Activated B cell treated with CpG ODN at 0.5 μM for 24 hours (primary cell): ENCODE measurements at regions of chr11 and their contacts with region 1.

Region 1: GRCh38 chr11:64269380-64270234 is 14.9 kb downstream of the BAD start:
- DNase-seq: peak; percentile 97
- ATAC-seq: peak; percentile 72
- H3K4me3 Mint-ChIP-seq: peak overlapping the region; percentile 97
- H3K27ac Mint-ChIP-seq: peak overlapping the region; percentile 95
- H3K4me1 Mint-ChIP-seq: peaks cover 23% of the 10 kb centered on the region
- H3K27me3 Mint-ChIP-seq: no peaks in the 10 kb centered on the region
- CTCF ChIP-seq: no peak

Region 2: DNA sequence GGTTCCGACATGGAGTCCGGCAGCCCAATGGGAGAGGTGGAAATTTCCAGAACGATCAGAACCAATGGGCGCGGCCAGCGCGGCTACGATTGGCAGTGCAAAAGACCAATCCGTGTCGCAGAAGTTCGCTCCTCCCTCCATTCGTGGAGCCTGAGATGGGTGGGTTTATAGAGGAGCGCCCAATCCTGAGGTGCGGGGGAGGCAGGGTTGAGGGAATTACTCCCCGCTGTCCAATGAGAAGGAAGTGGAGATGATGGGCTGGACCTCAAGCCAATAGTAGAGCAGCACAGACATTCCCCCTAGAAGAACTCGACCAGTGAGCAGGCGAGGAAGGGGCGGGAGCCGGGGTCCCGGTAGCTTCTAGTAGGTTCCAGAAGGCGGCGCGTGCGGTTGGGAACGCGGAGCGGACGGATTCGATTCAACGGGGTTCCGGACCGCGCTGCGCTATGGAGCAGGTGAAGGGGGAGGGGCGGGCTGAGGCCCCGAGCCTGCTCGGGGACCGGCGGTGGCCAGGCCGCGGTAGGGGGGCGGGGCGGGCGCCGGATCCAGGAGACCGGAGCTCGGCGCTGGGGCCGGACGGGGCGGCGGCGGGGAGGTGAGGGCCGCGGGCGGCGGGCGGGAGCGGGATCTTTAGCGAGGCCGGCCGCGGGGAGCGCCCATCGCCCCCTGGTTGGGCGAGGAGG is 83.7 kb before region 1 on chr11 and contains the start of gene STIP1:
- CTCF ChIA-PET with region 1: interaction called, 3 read pairs
- POLR2A ChIA-PET with region 1: interaction called, 19 read pairs
- intact Hi-C with region 1: loop called (anchors 1 kb)
- DNase-seq: peak; percentile 93
- ATAC-seq: peak; percentile 87
- H3K4me3 Mint-ChIP-seq: no peak within 1 kb of the TSS
- H3K27ac Mint-ChIP-seq: peak within 1 kb of the TSS; percentile 97
- H3K4me1 Mint-ChIP-seq: peaks cover 27% of the 10 kb centered on the region
- H3K27me3 Mint-ChIP-seq: no peaks in the 10 kb centered on the region
- CTCF ChIP-seq: no peak
- total RNA-seq, gene STIP1: 155 and 159 TPM in 2 replicates

Region 3: DNA sequence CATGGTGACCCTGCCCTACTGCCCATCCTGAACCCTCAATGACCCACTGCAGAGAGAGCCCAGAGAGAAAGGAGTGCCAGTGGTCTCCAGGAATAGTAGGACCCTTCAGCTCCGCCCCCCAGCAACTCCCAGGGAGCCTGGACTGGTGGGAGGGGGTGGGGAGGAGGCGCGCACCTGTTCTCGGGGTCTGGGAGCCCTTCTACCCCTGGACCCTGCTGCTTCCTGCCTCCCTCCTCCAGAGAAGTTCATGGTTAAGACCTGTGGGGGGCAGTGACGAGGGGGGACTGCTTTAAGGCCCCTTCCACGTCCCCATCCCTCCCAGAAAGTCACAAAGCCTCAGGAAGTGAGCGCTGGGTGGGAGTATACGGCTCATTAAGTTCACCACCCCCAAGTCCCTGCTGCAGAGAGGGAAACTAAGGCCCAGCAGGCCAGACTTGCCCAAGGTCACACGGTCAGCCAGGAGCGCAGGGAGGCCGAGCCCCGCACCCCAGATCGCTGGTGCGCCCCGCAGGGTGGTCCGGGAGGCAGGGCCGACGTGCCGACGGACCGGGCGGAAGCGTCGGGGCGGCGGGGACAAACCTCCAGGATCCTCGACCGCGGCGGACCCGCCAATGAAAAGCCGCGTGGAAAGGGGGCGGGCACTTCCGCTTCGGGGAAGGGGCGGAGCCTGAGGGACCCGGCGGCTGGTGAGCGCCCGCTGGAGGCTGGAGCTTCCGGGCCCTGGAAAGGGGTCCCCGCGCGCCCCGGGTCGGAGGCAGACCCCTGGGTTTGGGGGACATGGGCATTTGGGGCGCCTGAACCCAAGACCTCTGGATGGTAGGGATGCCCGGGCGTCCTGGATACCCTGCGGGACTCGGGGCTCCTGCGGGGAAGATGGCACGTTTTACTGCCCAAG is 43.7 kb before region 1 on chr11 and contains the starts of genes NUDT22 and TRPT1:
- CTCF ChIA-PET with region 1: no interaction called
- POLR2A ChIA-PET with region 1: interaction called, 39 read pairs
- intact Hi-C with region 1: loop called (anchors 1 kb)
- DNase-seq: peak; percentile 95
- ATAC-seq: peak; percentile 56
- H3K4me3 Mint-ChIP-seq: peak within 1 kb of the TSS; percentile 87
- H3K27ac Mint-ChIP-seq: peak within 1 kb of the TSS; percentile 81
- H3K4me1 Mint-ChIP-seq: peaks cover 39% of the 10 kb centered on the region
- H3K27me3 Mint-ChIP-seq: no peaks in the 10 kb centered on the region
- CTCF ChIP-seq: no peak
- total RNA-seq, gene NUDT22: 81.0 and 95.3 TPM in 2 replicates
- total RNA-seq, gene TRPT1: 50.6 and 51.3 TPM in 2 replicates

Region 4: DNA sequence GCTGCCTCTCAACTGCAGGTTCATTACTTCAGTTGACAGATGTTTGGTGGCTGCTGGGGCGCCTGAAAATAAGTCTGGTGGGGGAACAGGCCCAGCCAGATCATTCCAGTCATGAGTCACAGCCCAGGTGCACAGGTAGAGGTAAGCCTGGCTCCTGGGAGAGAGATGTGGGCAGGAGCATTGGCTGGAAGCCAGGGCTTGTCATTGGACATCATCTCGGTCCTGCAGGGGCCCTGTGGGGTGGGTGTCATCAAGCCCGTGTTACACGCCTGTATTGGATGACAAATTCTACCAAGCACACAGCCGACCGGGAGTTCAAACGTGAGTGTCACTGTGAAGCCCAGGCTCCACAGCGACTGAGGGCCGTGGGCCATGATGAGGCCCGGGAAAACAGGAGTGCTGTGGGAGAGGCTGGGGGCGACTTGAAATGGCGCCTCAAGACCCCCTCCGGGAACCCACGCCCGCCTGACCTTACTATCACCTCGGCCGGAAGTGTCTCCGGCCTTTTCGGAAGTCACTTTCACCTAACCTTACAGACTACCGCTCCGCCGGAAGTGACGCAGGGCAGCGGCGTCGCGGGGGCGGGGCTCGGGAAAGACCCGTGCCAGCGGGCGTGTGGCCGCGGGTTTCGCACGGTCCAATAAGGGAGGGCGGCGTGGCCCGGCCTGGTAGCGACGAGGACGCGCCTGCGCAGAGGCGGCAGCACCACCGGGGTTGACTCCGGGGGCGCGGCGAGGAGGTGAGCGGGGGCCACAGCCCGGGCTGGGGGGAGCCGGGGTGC is 29.0 kb before region 1 on chr11 and contains the start of gene FKBP2:
- CTCF ChIA-PET with region 1: no interaction called
- POLR2A ChIA-PET with region 1: interaction called, 81 read pairs
- intact Hi-C with region 1: loop called (anchors 1 kb)
- DNase-seq: peak; percentile 98
- ATAC-seq: peak; percentile 61
- H3K4me3 Mint-ChIP-seq: peak within 1 kb of the TSS; percentile 91
- H3K27ac Mint-ChIP-seq: peak within 1 kb of the TSS; percentile 98
- H3K4me1 Mint-ChIP-seq: peaks cover 75% of the 10 kb centered on the region
- H3K27me3 Mint-ChIP-seq: no peaks in the 10 kb centered on the region
- CTCF ChIP-seq: no peak
- total RNA-seq, gene FKBP2: 31.4 and 39.4 TPM in 2 replicates

Region 5: DNA sequence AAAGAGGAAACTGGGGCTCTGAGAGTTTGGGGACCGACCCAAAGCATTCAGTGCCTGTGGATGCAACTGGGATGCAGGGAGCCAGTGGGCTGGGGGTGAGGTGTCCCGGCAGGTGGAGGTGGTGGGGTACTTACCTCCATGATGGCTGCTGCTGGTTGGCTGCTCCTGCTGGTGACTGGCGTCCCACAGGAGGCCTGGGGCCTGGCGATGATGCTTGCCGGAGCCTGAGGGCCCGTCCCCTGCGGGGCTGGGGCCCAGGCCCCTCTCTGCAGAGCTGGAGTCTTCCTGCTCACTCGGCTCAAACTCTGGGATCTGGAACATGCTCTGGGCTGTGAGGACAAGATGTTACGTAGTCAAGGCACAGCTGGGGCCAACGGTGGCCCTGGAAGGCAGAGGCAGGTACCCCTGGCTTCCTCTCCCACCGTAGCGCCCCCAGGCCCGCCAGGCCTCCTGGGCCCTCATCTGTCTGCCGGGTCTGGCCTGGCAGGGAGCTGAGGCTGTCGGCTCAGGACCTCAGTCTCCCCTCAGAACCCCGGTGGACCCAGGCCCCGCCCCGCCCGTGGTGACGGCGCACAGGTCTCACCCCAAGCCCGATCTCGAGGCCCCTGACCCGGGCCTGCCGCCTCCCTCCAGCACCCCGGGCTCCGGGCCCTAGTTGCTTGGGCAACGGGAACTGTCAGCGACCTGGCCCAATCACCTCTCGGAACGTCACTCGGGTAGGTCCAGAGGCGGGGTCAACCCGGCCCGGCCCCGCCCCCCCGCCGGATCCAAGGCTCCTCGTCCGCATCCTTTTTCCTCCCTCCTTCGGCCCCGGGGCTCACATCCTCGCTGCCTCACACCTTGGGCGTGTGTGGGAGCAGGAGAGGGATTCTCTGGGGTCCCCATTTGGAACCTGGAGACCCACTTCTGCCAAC is 14.7 kb after region 1 on chr11 and contains the start of gene BAD:
- CTCF ChIA-PET with region 1: interaction called, 5 read pairs
- POLR2A ChIA-PET with region 1: interaction called, 119 read pairs
- intact Hi-C with region 1: loop called (anchors 1 kb)
- DNase-seq: peak; percentile 80
- ATAC-seq: peak; percentile 79
- H3K4me3 Mint-ChIP-seq: peak within 1 kb of the TSS; percentile 90
- H3K27ac Mint-ChIP-seq: peak within 1 kb of the TSS; percentile 92
- H3K4me1 Mint-ChIP-seq: peaks cover 20% of the 10 kb centered on the region
- H3K27me3 Mint-ChIP-seq: no peaks in the 10 kb centered on the region
- CTCF ChIP-seq: no peak
- total RNA-seq, gene BAD: 21.7 and 26.6 TPM in 2 replicates

Region 6: DNA sequence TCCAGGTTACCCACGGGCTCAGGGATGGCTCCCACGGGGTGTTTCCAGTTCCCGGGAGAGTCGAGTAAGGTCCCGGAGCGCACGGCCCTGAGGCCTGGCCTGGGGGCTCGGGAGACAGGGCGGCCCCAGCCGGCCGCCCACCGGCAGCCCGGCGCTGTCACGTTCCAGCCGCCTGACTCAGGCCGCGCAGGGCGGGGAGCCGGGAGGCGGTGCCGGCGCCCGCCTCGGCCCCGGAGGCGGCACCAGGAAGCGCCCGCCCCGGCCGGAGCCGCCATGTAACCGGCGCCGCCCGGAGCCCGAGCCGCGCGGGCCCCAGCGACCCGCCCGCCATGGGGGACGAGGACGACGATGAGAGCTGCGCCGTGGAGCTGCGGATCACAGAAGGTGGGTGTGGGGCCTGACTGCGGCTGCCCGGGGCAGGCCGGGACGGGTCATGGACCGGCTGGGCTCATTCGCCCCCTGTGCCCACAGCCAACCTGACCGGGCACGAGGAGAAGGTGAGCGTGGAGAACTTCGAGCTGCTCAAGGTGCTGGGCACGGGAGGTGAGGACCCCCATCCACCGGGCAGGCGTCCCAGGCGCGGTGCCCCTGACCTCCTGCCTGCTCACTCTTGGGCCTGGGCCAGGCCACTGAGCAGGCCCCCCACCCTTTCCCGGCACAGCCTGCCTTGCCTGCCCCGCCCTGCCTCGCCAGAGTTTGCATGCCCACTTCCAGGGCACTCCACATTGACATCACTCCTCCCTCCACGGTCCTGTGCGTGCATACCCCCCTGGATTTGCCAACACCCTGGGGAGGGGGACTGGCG is 89.5 kb after region 1 on chr11 and contains the start of gene RPS6KA4:
- CTCF ChIA-PET with region 1: interaction called, 7 read pairs
- POLR2A ChIA-PET with region 1: interaction called, 9 read pairs
- intact Hi-C with region 1: loop called (anchors 1 kb)
- DNase-seq: peak; percentile 55
- ATAC-seq: peak; percentile 72
- H3K4me3 Mint-ChIP-seq: peak within 1 kb of the TSS; percentile 82
- H3K27ac Mint-ChIP-seq: peak within 1 kb of the TSS; percentile 53
- H3K4me1 Mint-ChIP-seq: peaks cover 47% of the 10 kb centered on the region
- H3K27me3 Mint-ChIP-seq: no peaks in the 10 kb centered on the region
- CTCF ChIP-seq: no peak
- total RNA-seq, gene RPS6KA4: 18.0 and 22.6 TPM in 2 replicates

Region 7: DNA sequence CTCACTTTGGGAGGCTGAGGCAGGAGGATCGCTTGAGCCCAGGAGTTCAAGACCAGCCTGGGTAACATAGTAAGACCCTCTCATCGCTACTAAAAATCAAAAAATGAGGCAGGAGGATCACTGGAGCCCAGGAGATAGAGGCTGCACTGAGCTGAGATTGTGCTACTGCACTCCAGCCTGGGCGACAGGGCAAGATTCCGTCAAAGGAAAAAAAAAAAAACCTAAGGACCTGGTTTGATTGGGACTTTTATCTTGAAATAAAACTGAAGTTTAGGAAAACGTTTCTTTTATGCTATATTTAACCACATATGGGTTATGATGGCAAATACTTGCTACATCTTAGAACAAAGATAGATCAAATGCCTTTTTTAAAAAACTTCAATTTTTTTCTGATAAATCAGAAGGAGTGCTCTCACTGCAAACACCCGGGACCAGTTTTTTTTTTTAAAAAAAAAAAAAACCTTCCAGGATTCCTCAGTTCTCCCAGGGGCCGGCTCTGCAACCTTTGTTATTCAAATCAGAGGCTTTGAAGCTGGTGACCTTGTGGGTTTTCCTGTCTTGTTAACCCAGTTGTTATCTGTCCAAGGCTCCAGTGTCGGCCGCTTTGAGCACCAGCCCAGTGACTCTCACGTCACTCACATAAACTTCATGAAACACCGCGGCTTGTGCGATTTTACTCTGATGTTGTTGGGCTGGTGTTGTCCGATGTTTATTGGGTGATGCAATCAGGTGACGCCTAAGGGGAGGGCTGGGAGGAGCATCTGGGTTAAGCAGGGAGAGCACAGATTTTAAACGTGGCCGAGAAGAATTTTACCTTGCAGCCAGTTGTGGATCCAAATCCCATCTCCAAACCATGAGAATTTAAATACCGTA is 296.7 kb after region 1 on chr11:
- CTCF ChIA-PET with region 1: no interaction called
- POLR2A ChIA-PET with region 1: no interaction called
- intact Hi-C with region 1: no loop called
- DNase-seq: no peak
- ATAC-seq: no peak
- H3K4me3 Mint-ChIP-seq: no peak overlapping the region
- H3K27ac Mint-ChIP-seq: no peak overlapping the region
- H3K4me1 Mint-ChIP-seq: no peaks in the 10 kb centered on the region
- H3K27me3 Mint-ChIP-seq: no peaks in the 10 kb centered on the region
- CTCF ChIP-seq: no peak